A549 (cell line): ENCODE measurements at regions of chr6 and their contacts with region 1.

Region 1: DNA sequence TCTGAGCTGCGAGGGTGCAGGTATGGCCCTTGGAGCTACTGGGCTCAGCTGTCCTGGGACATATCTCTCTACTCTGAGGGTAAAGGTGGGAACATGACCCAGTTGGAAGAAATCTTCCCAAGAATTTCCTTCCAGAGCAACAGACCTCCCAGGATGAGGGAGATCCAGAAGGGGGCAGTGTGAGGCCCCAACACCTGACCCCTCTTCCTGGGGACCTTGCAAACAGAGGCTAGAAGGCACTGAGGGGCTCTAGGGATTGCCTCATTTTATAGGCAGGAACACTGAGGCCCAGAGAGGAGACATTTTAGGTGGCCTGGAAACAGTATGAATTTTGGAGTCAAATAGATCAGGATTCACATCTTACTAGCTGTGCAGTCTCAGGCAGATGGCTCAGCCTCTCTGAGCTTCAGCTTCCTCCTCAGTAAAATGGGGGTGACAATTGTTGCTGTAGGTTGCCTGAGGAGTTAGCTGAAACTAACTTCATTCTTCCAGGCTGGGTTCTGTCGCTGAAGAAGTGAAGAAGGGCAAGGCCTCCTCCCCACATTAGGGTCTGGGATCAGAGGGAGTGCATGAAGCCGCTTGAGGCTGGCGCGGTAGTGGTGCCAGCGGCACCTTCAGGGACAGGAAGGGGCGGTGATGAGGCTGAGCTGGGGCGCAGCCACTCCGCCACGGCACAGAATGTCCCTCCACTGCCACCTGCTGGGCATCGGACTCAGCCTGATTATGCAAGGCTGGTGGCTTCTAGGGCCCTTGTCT is 11.4 kb downstream of the KCNK17 start:
- DNase-seq: peak; percentile 71 to 78
- ATAC-seq: peak; percentile 89 to 96
- H3K4me3 ChIP-seq: 0 out of 3 replicates have a peak overlapping the region, but pooled peaks have one; percentile 23
- H3K27ac ChIP-seq: peak overlapping the region; percentile 40 to 55; a peak in 3 of 6 replicates
- H3K4me1 ChIP-seq: 0 out of 3 replicates have a peak, but pooled peaks cover 3% of the 10 kb centered on the region
- CTCF ChIP-seq: peak; percentile 71
- EP300 ChIP-seq: no peak
- POLR2A ChIP-seq: no peak
- RAD21 ChIP-seq: peak; percentile 89 to 90

Region 2: DNA sequence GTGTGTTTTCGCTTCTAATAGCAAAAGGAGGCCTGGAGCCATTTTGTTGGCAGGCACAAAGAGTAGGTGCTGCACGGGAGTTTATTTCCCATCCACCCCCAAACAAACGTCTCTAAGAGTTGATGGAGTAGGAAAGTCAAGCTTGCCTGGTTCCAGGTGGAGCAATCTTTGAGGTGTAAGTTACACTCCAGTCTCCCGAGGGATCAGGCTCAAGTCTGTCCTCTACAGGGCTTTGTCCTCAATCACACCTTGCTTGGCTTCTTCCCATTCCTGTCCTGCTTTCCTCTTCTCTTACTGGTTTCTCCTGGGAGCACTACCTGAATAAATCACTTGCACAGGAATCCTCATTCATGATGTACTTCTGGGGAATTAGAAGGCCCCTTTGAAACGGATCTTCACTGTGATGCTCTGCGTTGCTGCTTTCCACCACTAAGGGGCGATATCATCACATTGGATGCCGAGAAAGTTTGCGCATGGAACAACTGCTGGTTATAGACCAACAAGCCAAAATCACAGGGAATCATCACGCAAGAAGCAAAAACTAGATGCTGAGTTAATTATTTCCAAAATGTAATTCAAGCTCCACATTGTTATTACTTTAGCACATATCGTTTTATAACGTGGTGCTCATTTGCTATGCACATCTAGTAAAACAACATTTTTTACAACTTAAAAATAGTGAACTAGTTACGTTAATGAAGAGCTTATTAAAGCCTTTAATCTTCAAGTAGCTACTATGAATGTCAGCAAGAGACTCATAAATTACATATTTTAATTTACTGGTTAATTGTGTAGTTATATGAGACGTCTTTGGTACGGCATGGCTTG is 430.9 kb before region 1 on chr6:
- CTCF ChIA-PET with region 1: interaction called, 23 read pairs
- POLR2A ChIA-PET with region 1: no interaction called
- DNase-seq: peak; percentile 18 to 38
- ATAC-seq: peak; percentile 64 to 78; a peak in 5 of 6 replicates
- H3K4me3 ChIP-seq: no peak overlapping the region
- H3K27ac ChIP-seq: no peak overlapping the region
- H3K4me1 ChIP-seq: no peaks in the 10 kb centered on the region
- CTCF ChIP-seq: peak; percentile 63
- EP300 ChIP-seq: no peak
- POLR2A ChIP-seq: no peak
- RAD21 ChIP-seq: peak; percentile 63 to 74

Region 3: DNA sequence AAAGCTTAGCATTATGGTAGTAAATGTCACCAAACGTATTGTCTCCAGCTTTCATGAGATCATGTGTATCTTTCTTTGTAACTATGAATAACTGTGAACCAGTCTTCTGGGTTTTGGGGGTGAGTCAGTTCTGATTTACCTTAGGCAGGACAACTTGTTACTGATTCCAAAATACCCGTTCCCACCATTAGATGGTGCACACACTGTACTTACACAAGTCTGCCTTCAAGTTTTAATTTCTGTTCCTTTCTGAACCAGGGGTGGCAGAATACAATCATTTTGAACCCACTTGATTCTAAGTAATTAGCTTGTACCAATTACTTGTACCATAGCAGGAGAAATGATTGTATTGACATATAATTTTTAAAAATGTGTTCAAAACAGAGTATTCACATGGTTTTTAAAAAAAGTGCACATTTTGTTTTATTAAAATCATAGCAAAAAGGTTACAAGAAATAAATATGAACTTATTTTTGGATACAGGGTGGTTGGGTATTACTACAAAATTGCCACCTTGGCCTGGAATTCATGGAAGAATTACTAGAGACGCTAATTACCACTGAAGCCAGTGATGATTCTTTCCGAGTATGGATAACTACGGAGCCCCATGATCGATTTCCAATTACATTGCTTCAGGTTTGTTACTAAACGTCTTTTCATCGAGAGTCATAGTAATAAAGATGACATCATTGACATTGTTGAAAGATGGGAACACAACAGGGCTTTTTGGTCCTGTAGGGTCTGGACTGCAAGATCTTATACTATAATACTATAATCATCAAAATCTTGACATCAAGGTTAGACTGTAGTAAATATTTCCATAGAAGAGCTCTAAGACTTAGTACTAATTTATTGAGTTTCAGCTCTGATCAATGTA is 329.4 kb before region 1 on chr6:
- CTCF ChIA-PET with region 1: interaction called, 36 read pairs
- POLR2A ChIA-PET with region 1: no interaction called
- DNase-seq: peak; percentile 33 to 74
- ATAC-seq: peak; percentile 85 to 86
- H3K4me3 ChIP-seq: no peak overlapping the region
- H3K27ac ChIP-seq: no peak overlapping the region
- H3K4me1 ChIP-seq: no peaks in the 10 kb centered on the region
- CTCF ChIP-seq: peak; percentile 57
- EP300 ChIP-seq: no peak
- POLR2A ChIP-seq: no peak
- RAD21 ChIP-seq: peak; percentile 53 to 55

Region 4: GRCh38 chr6:39189915-39190544 is 112.8 kb before region 1 on chr6:
- CTCF ChIA-PET with region 1: interaction called, 15 read pairs
- POLR2A ChIA-PET with region 1: no interaction called
- DNase-seq: peak; percentile 36 to 49
- ATAC-seq: peak; percentile 95 to 98
- H3K4me3 ChIP-seq: no peak overlapping the region
- H3K27ac ChIP-seq: 0 out of 6 replicates have a peak overlapping the region, but pooled peaks of 1 of the 2 experiments have one; percentile 38
- H3K4me1 ChIP-seq: peaks cover 25% of the 10 kb centered on the region
- CTCF ChIP-seq: no peak; the same call in 2 of the 3 replicates
- EP300 ChIP-seq: no peak
- POLR2A ChIP-seq: no peak
- RAD21 ChIP-seq: peak; percentile 37 to 47; a peak in 4 of 5 replicates